ENCODE measurements at regions of chr3 and their contacts with region 1.

Region 1: DNA sequence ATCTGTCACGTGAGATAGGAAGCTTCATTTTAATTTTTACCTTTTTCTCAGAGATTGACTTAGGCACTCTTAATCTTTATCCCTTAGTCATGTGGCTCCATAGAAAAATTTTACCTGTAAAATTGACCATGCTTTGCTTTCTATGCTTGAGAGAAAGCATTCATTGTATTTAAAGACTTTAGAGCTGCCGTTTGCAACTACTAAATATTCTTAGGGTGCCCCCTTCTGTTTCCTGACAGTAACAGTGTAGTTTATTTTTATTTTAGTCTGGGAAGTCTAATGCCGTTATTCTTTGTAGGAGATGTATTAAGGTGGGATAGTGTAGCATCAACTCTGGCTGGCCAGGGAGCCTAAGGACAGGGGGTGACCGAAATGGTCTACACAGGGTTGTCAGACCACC is 84.5 kb upstream of the SYNPR start:
- DNase-seq: peak; percentile 14
- H3K4me3 Mint-ChIP-seq: no peak overlapping the region
- H3K27ac Mint-ChIP-seq: no peak overlapping the region
- H3K4me1 Mint-ChIP-seq: peaks cover 25% of the 10 kb centered on the region
- H3K27me3 Mint-ChIP-seq: no peaks in the 10 kb centered on the region
- CTCF ChIP-seq: peak; percentile 16

Region 2: GRCh38 chr3:62665598-62666437 is 527.8 kb before region 1 on chr3:
- CTCF ChIA-PET with region 1: interaction called, 5 read pairs
- intact Hi-C with region 1: loop called (anchors 2 kb)
- DNase-seq: peak; percentile 75
- H3K4me3 Mint-ChIP-seq: no peak overlapping the region
- H3K27ac Mint-ChIP-seq: no peak overlapping the region
- H3K4me1 Mint-ChIP-seq: no peaks in the 10 kb centered on the region
- H3K27me3 Mint-ChIP-seq: peaks cover 70% of the 10 kb centered on the region
- CTCF ChIP-seq: peak; percentile 59

Region 3: DNA sequence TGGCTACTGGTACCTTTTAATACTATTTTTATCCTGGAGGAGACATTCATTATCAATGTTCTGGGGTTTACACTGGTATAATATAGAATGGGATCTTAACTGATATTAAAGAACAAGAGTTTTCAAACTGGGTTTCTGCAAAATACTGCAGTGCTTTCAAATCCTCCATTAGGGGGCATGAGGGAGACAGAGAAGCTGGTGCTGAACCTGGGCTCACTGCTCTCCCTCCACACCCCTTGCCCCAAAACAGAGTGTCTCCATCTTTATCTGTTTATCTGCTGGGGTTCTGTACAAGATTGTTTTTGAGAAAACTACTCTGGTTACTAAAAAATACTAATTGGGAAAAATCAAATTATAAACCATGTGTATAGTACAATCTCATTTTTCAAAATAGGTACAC is 360.1 kb before region 1 on chr3:
- CTCF ChIA-PET with region 1: interaction called, 5 read pairs
- intact Hi-C with region 1: loop called (anchors 1 kb)
- DNase-seq: no peak
- H3K4me3 Mint-ChIP-seq: no peak overlapping the region
- H3K27ac Mint-ChIP-seq: no peak overlapping the region
- H3K4me1 Mint-ChIP-seq: peaks cover 8% of the 10 kb centered on the region
- H3K27me3 Mint-ChIP-seq: peaks cover 13% of the 10 kb centered on the region
- CTCF ChIP-seq: peak; percentile 12

Region 4: GRCh38 chr3:62873761-62874647 is 319.6 kb before region 1 on chr3:
- CTCF ChIA-PET with region 1: interaction called, 26 read pairs
- intact Hi-C with region 1: loop called (anchors 1 kb)
- DNase-seq: peak; percentile 55
- H3K4me3 Mint-ChIP-seq: peak overlapping the region; percentile 88
- H3K27ac Mint-ChIP-seq: no peak overlapping the region
- H3K4me1 Mint-ChIP-seq: peaks cover 8% of the 10 kb centered on the region
- H3K27me3 Mint-ChIP-seq: peaks cover 62% of the 10 kb centered on the region
- CTCF ChIP-seq: no peak

Region 5: GRCh38 chr3:62940771-62941563 is 252.7 kb before region 1 on chr3:
- CTCF ChIA-PET with region 1: interaction called, 5 read pairs
- intact Hi-C with region 1: loop called (anchors 10 kb)
- DNase-seq: no peak
- H3K4me3 Mint-ChIP-seq: no peak overlapping the region
- H3K27ac Mint-ChIP-seq: peak overlapping the region; percentile 94
- H3K4me1 Mint-ChIP-seq: peaks cover 22% of the 10 kb centered on the region
- H3K27me3 Mint-ChIP-seq: no peaks in the 10 kb centered on the region
- CTCF ChIP-seq: no peak

Region 6: DNA sequence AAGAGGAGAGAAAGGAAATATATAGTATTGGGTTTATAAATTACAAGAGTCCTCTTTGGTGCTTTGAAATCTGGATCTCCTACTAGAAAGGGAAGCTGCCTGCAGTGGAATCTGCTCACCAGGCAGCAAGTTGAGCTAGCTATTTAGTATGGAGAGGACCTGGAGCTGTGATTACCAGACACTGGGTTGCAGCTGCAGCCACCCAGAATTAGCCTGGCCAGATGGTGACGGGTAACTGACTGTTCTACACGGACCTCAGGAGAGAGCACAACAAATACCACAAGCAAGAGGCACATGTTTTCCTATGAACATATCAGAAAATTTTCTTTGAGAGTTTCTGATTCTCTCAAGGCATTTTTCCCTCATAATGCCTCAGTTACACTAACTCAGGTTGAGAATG is 131.0 kb after region 1 on chr3:
- CTCF ChIA-PET with region 1: no interaction called
- intact Hi-C with region 1: no loop called
- DNase-seq: no peak
- H3K4me3 Mint-ChIP-seq: no peak overlapping the region
- H3K27ac Mint-ChIP-seq: no peak overlapping the region
- H3K4me1 Mint-ChIP-seq: no peaks in the 10 kb centered on the region
- H3K27me3 Mint-ChIP-seq: no peaks in the 10 kb centered on the region
- CTCF ChIP-seq: no peak